SK-N-SH (cell line): ENCODE measurements at regions of chr15 and their contacts with region 1.

Region 1: DNA sequence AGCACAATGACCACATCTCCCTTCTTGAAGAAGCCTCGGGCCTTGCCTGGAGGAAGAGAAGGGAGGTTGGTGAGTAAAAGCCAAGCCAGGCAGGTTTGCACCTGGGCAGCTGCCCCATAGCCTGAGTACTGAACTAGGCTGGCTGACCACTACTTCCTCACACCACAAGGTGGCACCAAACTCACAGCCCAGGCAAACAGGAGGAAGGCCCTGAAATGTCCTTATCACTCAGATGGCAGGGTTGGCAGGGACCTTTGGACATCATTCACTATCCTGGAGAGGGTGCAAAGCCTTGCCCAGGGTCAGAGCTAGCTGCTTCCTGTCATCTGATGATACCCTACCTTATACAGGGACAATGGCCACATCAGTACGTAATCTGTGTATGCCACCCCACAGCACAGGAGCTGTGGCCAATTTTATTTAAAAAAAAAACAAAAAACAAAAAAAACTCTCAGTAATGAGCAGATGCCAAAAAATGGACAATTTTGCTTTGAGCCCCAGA is 2.2 kb upstream of the GRAMD2A start:
- DNase-seq: peak; percentile 87
- H3K4me3 ChIP-seq: no peak overlapping the region
- H3K27ac ChIP-seq: peak overlapping the region; percentile 47 to 66; a peak in 2 of 4 replicates
- H3K4me1 ChIP-seq: peaks cover 23 to 34% of the 10 kb centered on the region in 2 experiments
- H3K27me3 ChIP-seq: no peaks in the 10 kb centered on the region
- CTCF ChIP-seq: peak; percentile 88
- EP300 ChIP-seq: no peak
- RAD21 ChIP-seq: peak; percentile 92

Region 2: DNA sequence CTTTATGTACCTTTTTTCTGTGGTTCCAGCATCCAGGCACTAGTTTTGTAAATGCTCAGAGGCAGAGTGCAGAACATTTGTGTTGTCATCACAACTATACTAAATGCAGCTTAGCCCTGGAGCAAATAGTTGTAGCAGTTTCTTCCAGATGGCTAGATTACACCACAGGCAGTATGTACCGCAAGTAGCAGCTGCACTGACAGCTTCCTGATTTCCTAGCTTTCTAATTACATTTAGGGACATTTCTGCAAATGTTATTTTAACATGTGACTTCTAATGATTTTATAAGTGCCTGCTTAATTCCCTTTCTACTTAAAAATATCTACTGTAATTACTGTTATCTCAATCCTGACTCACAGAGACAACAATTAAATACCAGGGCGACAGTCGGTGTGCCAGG is 282.9 kb before region 1 on chr15:
- CTCF ChIA-PET with region 1: no interaction called
- POLR2A ChIA-PET with region 1: no interaction called
- DNase-seq: peak; percentile 55
- H3K4me3 ChIP-seq: no peak overlapping the region
- H3K27ac ChIP-seq: peak overlapping the region in 1 of 2 experiments; percentile 94; a peak in 2 of 4 replicates
- H3K4me1 ChIP-seq: peaks cover 0 to 7% of the 10 kb centered on the region in 2 experiments; a peak in 2 of 4 replicates
- H3K27me3 ChIP-seq: no peaks in the 10 kb centered on the region
- CTCF ChIP-seq: no peak
- EP300 ChIP-seq: peak in 1 of 2 experiments; percentile 91; a peak in 2 of 4 replicates
- RAD21 ChIP-seq: peak; percentile 28

Region 3: DNA sequence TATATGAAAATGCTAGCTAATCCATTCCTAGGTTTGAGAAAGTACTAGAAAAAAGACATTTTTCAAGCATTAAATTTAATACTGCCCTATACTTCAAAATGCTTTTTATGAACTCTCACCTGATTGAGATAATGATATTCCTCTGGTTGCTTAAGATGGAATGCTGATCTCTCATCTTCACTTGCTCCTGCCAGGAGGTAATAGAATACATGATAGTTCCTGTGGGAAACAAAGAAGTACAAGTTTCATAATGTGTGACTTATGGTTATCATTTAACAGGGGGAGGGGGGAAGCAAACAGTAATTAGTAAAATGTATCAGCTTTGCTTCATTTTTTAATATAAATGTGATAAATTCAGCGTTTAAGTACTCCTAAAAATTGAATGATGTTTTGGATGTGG is 179.0 kb before region 1 on chr15:
- CTCF ChIA-PET with region 1: no interaction called
- POLR2A ChIA-PET with region 1: no interaction called
- DNase-seq: no peak
- H3K4me3 ChIP-seq: no peak overlapping the region
- H3K27ac ChIP-seq: no peak overlapping the region
- H3K4me1 ChIP-seq: no peaks in the 10 kb centered on the region
- H3K27me3 ChIP-seq: no peaks in the 10 kb centered on the region
- CTCF ChIP-seq: no peak
- EP300 ChIP-seq: no peak
- RAD21 ChIP-seq: no peak

Region 4: GRCh38 chr15:72063186-72063585 is 136.6 kb before region 1 on chr15:
- CTCF ChIA-PET with region 1: no interaction called
- POLR2A ChIA-PET with region 1: no interaction called
- DNase-seq: no peak
- H3K4me3 ChIP-seq: no peak overlapping the region
- H3K27ac ChIP-seq: no peak overlapping the region
- H3K4me1 ChIP-seq: no peaks in the 10 kb centered on the region
- H3K27me3 ChIP-seq: no peaks in the 10 kb centered on the region
- CTCF ChIP-seq: no peak
- EP300 ChIP-seq: no peak
- RAD21 ChIP-seq: no peak

Region 5: GRCh38 chr15:72237286-72238224 is 37.8 kb after region 1 on chr15:
- CTCF ChIA-PET with region 1: interaction called, 23 read pairs
- POLR2A ChIA-PET with region 1: no interaction called
- DNase-seq: peak; percentile 15
- H3K4me3 ChIP-seq: peak overlapping the region; percentile 40 to 73; a peak in 3 of 4 replicates
- H3K27ac ChIP-seq: peak overlapping the region; percentile 78 to 99
- H3K4me1 ChIP-seq: peaks cover 5 to 22% of the 10 kb centered on the region in 2 experiments; a peak in 3 of 4 replicates
- H3K27me3 ChIP-seq: no peaks in the 10 kb centered on the region
- CTCF ChIP-seq: no peak
- EP300 ChIP-seq: peak in 1 of 2 experiments; percentile 84; a peak in 2 of 4 replicates
- RAD21 ChIP-seq: no peak

Region 6: DNA sequence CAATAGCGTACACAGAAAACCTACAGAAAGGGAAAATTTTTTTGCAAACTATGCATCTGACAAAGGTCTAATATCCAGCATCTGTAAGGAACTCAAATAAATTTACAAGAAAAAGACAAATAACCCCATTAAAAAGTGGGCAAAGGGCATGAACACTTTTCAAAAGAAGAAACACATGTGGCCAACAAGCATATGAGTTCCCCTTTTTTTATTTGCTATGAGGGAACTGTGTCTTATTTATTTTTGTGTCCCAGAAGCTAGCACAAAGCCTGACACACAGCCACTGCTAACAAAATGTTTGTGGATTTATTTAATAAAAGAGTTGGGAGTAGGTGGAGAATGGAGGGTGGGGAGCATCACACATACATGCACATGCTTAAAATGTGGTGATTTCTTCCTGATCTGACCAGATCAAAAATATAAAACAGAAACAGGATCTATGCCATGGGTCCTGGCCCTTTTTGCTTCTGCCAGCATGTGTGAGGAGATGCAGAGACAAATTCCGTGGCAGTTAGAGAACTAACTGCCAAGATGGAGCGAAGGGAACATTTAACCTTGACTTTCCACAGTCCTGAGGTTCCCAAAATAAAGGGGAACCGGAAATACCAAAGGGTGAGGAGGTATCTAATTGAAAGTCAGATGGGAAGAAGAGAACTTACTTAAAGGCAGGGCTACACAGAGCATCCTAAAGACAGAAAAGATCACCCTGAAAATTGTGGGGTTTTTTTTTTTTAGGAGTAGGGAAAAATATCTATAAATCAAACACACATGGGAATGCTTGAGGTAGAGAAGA is 198.2 kb after region 1 on chr15 and contains the start of gene TMEM202:
- CTCF ChIA-PET with region 1: no interaction called
- POLR2A ChIA-PET with region 1: no interaction called
- DNase-seq: no peak
- H3K4me3 ChIP-seq: no peak within 1 kb of the TSS
- H3K27ac ChIP-seq: no peak within 1 kb of the TSS
- H3K4me1 ChIP-seq: no peaks in the 10 kb centered on the region
- H3K27me3 ChIP-seq: peaks cover 25% of the 10 kb centered on the region; the same call in 1 of the 2 replicates
- CTCF ChIP-seq: no peak
- EP300 ChIP-seq: no peak
- RAD21 ChIP-seq: no peak
- polyA plus RNA-seq, gene TMEM202: not detected in 2 replicates